ENCODE measurements at regions of chr4 and their contacts with region 1.

Region 1: DNA sequence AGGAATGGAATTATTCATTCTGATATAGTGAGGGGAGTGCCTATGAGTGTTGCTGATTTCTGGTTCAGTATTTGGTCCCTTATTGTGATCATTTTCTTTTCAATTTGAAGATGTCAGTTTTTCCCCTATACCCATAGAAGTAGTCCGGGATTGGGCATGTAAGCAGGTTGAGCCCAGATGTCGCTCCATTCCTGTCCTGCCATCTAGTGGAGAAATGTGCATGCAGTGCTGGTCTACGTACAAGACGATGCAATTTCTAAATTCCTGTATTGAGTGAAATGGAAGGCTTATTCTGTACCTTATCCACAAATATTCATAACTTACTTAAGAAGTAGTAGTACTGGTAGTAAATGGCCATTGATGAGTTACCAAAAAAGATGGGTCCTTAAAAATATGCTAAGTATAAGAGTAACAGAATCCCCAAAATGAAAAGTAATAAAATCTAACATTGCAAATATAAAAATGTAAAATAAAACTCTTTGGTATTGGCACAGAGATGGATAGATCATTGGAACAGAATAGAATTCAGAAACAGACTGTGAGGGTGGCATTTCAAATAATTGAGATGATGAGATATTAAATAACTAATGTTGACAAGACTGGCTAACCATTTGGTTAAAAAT is 60.9 kb downstream of the UGT8 start:
- DNase-seq: peak; percentile 70 to 78
- H3K4me3 ChIP-seq: no peak overlapping the region
- H3K4me1 ChIP-seq: no peaks in the 10 kb centered on the region
- H3K27me3 ChIP-seq: no peaks in the 10 kb centered on the region

Region 2: GRCh38 chr4:114417214-114417613 is 242.3 kb before region 1 on chr4:
- in situ Hi-C with region 1: loop called (anchors 10 kb)
- DNase-seq: peak in 1 of 2 experiments; percentile 33
- H3K4me3 ChIP-seq: no peak overlapping the region
- H3K4me1 ChIP-seq: no peaks in the 10 kb centered on the region; the same call in none of the 2 replicates
- H3K27me3 ChIP-seq: no peaks in the 10 kb centered on the region

Region 3: GRCh38 chr4:114582621-114583020 is 76.9 kb before region 1 on chr4:
- in situ Hi-C with region 1: no loop called
- DNase-seq: no peak
- H3K4me3 ChIP-seq: no peak overlapping the region
- H3K4me1 ChIP-seq: peaks cover 8% of the 10 kb centered on the region
- H3K27me3 ChIP-seq: no peaks in the 10 kb centered on the region